AG04449 (cell line): ENCODE measurements at regions of chr10 and their contacts with region 1.

Region 1: GRCh38 chr10:85995791-85996190 is 370.8 kb downstream of the GRID1 start:
- DNase-seq: peak; percentile 5
- H3K4me3 ChIP-seq: no peak overlapping the region
- CTCF ChIP-seq: peak; percentile 10

Region 2: DNA sequence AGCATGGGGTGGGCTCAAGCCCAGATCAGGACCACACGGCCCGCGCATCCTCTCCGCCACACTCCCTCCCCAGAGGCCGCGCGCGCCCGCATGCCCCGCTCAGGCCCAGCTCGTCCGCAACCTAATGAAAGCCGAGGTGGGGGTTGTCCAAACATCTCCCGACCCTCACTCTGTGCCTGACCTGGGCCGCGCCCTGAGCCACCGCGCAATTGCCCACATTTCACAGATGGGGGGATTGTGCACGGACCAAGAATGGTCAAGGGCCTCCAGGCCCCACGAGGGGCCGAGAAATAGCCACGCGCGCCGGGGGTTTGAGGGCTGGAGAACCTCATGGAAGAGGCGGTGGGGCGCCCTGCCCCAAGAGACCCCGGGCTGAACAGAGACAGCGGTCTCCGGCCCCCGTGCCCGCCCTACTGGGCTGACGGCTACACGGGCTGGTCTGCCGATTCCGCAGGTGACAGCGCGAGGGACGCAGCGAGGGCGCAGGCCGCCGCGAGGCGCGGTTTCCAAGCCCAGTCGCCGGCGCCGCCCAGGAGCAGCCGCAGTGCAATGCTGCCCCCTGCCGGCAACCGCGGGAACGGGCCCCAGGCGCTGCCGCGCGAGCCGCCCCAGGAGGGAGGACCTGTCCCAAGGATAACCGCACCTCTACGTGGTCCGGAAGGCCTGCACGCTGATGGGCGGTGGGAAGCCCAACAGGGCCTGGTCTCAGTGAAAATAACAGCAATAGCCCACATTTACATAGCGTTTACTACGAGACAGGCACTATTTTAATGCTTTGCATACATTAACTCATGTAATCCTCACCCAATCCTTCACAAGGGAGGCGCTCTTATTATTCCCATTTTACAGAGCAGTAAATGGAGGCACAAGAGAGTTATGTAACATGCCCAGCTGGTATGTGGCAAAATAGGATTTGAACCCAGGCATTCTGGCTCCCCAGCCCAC is 381.3 kb after region 1 on chr10:
- CTCF ChIA-PET with region 1: interaction called, 25 read pairs
- POLR2A ChIA-PET with region 1: no interaction called
- DNase-seq: no peak
- H3K4me3 ChIP-seq: peak overlapping the region; percentile 36
- CTCF ChIP-seq: peak; percentile 96